ENCODE measurements at regions of chr6 and their contacts with region 1.

Region 1: DNA sequence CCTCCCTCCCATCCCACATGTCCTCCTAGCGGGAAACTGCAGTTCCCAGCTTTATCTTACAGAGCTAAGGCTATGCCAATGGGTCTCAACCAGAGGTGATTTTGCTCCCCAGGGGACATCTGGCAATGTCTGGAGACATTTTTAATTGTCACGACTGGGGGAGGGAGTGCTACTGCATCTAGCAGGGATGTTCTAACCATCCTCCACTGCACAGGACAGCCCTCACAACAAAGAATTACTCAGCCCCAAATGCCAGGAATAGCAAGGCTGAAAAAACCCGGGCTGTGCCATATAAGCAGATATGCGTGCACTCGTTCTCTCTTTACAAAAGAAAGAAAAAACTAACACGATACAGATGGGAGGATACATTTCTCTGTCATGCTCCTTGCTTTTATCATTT is 8.5 kb downstream of the MRPS18A start:
- DNase-seq: no peak
- H3K4me3 ChIP-seq: no peak overlapping the region
- H3K27ac ChIP-seq: no peak overlapping the region
- H3K4me1 ChIP-seq: no peaks in the 10 kb centered on the region
- H3K27me3 ChIP-seq: no peaks in the 10 kb centered on the region
- CTCF ChIP-seq: no peak

Region 2: DNA sequence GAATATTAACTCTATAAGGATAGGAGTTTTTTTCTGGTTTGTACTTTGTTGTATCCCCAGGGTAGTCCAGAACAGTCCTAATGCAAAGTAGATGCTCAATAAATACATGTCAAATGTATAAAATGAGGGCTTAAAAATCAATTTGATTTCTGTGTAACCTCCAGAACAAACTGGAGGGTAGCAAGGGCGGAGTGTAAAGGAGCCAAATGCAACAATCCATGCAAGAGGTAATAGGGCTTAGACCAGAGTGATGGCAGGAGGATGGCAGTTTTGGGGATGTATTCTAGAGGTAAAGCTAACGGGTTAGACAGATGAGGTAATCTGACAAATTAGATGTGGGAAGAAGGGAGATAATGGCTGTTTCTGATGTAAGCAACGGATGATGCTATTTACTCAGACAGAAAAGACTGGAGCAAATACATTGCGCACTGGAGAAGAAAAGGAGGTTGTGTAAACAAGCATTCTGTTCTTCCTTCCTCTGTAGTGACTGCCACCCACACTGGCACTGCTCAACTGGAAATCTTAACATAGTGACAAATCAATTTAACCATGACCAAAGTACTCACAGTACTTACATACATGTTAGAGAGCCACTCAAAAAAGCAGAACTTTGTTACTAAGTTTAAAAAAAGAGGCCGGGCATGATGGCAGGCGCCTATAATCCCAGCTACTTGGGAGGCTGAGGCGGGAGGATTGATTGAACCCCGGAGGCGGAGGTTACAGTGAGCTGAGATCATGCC is 311.6 kb before region 1 on chr6:
- intact Hi-C with region 1: no loop called
- DNase-seq: no peak
- H3K4me3 ChIP-seq: peak overlapping the region; percentile 78 to 96
- H3K27ac ChIP-seq: no peak overlapping the region
- H3K4me1 ChIP-seq: peaks cover 0 to 26% (median 18%) of the 10 kb centered on the region in 4 donors
- H3K27me3 ChIP-seq: no peaks in the 10 kb centered on the region
- CTCF ChIP-seq: no peak

Region 3: DNA sequence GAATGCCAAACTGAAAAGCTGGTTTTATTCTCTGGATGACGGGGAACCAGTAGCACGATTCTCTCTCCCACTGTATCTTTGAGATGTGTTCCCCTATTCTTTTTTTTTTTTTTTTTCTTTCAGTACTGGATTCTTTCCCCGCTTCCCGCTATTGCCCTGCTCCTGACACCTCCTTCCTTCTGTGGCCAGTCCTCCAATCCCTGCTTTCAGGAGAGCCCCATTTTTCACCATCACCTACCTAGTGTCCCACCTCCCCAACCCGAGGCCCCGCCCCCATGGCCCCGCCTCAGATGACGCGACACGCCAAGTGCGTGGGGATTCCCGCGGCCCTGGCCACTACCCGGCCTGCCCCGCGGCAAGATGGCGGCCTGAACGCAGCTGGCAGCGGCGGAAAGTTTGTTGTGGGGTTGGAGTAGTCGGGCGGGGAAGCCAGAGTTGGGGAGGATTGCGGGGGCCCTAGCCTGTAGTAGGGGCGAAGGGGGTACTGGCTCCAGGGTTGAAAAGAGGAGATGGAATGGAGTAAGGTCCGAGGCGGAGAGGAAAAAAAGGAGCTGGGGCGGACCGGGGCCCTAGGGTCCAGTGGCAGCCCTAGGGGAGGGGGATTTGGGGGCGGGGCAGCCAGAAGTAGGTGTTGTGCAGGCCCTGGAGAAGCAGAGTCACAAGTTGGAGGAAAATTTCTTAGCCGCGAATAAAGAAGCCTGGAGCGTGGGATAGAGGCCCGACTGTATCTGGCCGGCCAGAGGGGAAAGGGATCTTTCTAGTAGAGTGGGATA is 201.6 kb before region 1 on chr6 and contains the start of gene TJAP1:
- intact Hi-C with region 1: no loop called
- DNase-seq: peak; percentile 91 to 95
- H3K4me3 ChIP-seq: peak within 1 kb of the TSS; percentile 59 to 71
- H3K27ac ChIP-seq: peak within 1 kb of the TSS; percentile 73 to 81
- H3K4me1 ChIP-seq: peaks cover 0 to 27% (median 20%) of the 10 kb centered on the region in 4 donors
- H3K27me3 ChIP-seq: no peaks in the 10 kb centered on the region
- CTCF ChIP-seq: no peak

Region 4: GRCh38 chr6:43521836-43522235 is 157.2 kb before region 1 on chr6:
- intact Hi-C with region 1: loop called (anchors 5 kb)
- DNase-seq: no peak
- H3K4me3 ChIP-seq: no peak overlapping the region
- H3K27ac ChIP-seq: no peak overlapping the region
- H3K4me1 ChIP-seq: peaks cover 0 to 17% (median 14%) of the 10 kb centered on the region in 4 donors
- H3K27me3 ChIP-seq: no peaks in the 10 kb centered on the region
- CTCF ChIP-seq: no peak

Measured in tibial artery (tissue), 4 donors.